GM10248 (cell line): ENCODE measurements at regions of chr9 and their contacts with region 1.

Region 1: GRCh38 chr9:132901856-132902831 is 23.4 kb downstream of the SPACA9 start:
- DNase-seq: peak; percentile 84
- CTCF ChIP-seq: peak; percentile 88

Region 2: DNA sequence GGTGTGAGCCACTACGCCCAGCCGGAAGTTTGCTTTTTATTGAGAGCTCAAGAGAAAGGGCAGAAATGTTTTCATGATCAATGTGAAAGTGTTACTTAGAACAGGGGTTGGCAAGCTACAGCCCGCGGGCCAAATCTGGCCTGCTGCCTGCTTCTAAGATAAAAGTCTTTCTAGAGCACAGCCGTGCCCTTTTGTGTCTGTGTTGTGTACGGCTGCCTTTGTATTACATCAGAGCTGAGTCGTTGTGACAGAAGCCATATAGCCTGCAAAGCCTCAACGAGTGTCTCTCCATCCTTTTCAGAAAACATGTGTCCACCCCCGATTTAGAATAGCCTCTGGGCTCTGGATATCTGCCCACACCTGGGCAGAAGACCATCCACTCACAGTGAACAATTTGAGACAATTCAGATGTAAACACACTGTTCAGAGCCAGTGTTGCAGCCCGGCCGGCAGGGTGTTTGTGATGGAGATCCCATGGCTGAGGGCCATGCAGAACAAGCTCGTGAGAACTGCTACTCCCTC is 52.9 kb before region 1 on chr9:
- CTCF ChIA-PET with region 1: interaction called, 27 read pairs
- POLR2A ChIA-PET with region 1: no interaction called
- DNase-seq: no peak
- CTCF ChIP-seq: no peak

Region 3: DNA sequence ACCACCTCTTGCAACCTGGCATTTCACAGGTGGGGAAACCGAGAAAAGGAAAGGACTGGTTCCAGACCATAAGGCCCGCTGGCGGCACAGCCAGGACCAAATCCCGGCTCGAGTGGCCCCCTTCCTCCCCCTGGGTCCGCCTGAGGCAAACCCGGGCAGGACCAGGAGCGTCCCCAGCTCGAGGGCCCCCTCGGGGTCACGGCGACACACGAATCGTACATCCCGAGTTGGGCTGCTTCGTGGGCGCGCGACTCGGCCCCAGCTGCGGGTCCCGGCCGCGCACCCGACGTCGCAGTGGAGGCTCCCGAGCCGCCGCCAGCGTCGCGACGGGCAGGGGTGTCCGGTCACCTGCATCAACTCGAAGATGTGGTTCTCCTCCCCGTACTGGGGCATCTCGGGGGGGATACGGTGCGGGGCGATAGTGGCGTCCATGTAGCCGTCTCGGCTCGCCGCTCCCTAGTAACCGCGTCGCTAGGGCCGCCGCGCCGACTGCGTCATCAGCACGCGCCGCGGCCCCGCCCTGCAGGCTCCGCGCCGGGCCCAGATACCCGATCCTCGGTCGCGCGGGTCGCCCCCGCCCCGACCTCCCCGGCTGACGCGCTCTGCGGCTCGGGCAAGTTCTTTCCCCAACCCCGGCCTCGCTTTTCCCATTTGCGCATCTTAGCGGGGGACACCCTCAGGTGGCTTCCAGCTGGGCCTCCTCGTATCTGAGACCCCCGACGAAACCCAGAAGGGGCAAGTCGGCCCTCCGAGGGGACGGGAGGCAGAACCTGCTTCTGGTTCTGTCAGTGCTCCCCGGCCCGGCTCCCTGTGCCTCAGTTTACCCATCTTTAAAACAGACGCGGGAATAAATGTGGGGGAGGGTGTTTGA is 24.1 kb before region 1 on chr9 and contains the start of gene AK8:
- CTCF ChIA-PET with region 1: interaction called, 42 read pairs
- POLR2A ChIA-PET with region 1: no interaction called
- DNase-seq: peak; percentile 95
- CTCF ChIP-seq: no peak

Region 4: GRCh38 chr9:132885718-132886333 is 16.3 kb before region 1 on chr9:
- CTCF ChIA-PET with region 1: interaction called, 42 read pairs
- POLR2A ChIA-PET with region 1: no interaction called
- DNase-seq: no peak
- CTCF ChIP-seq: no peak

Region 5: DNA sequence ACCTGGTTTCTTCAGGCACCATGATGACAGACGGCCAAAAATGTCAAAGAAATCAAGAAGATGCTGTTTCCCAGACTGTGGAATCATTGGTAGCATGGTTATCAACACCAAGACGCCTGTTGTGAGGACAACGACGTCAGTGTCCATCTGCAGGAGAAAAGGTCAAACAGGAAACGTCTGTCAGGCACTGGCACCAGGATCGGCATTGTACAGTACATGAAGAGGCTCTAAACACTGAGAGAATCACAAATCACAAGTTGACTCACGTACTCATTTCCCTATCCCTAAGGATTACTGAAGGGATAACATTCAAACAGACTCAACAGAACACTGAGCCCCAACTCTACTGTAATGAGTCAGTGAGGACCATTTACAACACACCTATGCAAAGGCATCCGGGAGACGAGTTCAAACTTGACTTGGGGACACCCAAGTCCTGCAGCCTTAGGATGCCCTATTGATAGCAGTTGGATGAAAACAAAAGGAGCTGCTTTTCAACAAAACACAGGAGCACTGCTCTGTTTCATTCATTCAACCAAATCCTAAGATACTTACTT is 21.3 kb after region 1 on chr9:
- CTCF ChIA-PET with region 1: interaction called, 135 read pairs
- POLR2A ChIA-PET with region 1: no interaction called
- DNase-seq: no peak
- CTCF ChIP-seq: no peak

Region 6: GRCh38 chr9:132955768-132956167 is 53.6 kb after region 1 on chr9:
- CTCF ChIA-PET with region 1: no interaction called
- POLR2A ChIA-PET with region 1: no interaction called
- DNase-seq: no peak
- CTCF ChIP-seq: no peak